GM12878 (cell line): ENCODE measurements at regions of chr13 and their contacts with region 1.

Region 1: DNA sequence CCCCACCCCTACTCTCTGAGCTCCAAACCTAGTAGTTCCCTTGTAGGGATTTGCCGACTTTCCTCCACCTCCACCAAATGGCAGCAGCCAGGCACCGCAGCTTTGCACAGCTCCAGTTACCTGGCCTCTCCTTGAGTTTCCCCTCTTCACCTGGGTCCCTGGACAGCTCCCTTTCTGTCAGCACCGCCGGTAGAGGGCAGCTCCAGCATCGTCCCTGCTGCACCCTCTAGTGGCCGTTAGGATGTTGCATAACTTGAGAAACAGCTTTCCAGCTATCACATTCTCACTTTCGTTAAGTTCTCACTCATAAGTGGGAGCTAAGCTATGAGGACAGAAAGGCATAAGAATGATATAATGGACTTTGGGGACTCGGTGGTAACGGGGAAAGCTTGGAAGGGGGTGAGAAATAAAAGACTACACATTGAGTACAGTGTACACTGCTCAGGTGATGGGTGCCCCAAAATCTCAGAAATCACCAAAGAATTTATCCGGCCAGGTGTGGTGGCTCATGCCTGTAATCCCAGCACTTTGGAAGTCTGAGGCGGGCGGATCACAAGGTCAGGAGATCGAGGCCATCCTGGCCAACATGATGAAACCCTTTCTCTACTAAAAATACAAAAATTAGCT is 60.4 kb upstream of the OLFM4 start:
- DNase-seq: peak; percentile 16
- ATAC-seq: peak; percentile 100
- H3K4me3 ChIP-seq: no peak overlapping the region
- H3K27ac ChIP-seq: no peak overlapping the region
- H3K4me1 ChIP-seq: no peaks in the 10 kb centered on the region
- H3K27me3 ChIP-seq: no peaks in the 10 kb centered on the region; a peak in 1 of 4 replicates
- CTCF ChIP-seq: peak; percentile 98 to 100 (median 99)
- EP300 ChIP-seq: no peak
- POLR2A ChIP-seq: no peak
- RAD21 ChIP-seq: peak; percentile 91

Region 2: DNA sequence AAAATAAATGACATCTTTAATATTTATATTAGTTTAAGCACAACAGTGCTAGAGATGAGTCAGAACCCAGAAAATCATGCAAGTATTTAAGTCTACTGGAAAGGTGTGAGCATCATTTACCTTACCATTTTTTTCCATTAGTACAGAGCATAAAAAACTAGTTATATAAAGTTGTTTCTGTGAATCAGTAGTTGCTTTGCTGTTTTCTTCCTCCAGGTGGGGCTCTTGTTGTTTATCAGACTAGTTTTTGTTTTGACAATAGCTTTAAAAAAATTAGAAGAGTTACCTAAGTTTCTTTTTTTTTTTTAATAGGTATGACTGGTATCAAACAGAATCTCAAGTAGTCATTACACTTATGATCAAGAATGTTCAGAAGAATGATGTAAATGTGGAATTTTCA is 302.9 kb before region 1 on chr13:
- CTCF ChIA-PET with region 1: interaction called, 98 read pairs
- POLR2A ChIA-PET with region 1: interaction called, 3 read pairs
- RAD21 ChIA-PET with region 1: interaction called, 57 read pairs
- SMC1A ChIA-PET with region 1: interaction called, 70 read pairs
- in situ Hi-C with region 1: loop called (anchors 10 kb)
- intact Hi-C with region 1: loop called (anchors 5 kb)
- DNase-seq: no peak
- ATAC-seq: peak; percentile 34
- H3K4me3 ChIP-seq: no peak overlapping the region
- H3K27ac ChIP-seq: no peak overlapping the region
- H3K4me1 ChIP-seq: peaks cover 3% of the 10 kb centered on the region; the same call in 1 of the 2 replicates
- H3K27me3 ChIP-seq: no peaks in the 10 kb centered on the region
- CTCF ChIP-seq: peak; percentile 38 to 53 (median 52); a peak in 4 of 6 replicates
- EP300 ChIP-seq: no peak
- POLR2A ChIP-seq: no peak
- RAD21 ChIP-seq: peak; percentile 60

Region 3: GRCh38 chr13:52815330-52815729 is 152.9 kb before region 1 on chr13:
- CTCF ChIA-PET with region 1: interaction called, 21 read pairs
- POLR2A ChIA-PET with region 1: no interaction called
- RAD21 ChIA-PET with region 1: interaction called, 24 read pairs
- SMC1A ChIA-PET with region 1: interaction called, 13 read pairs
- in situ Hi-C with region 1: no loop called
- intact Hi-C with region 1: no loop called
- DNase-seq: no peak
- ATAC-seq: no peak
- H3K4me3 ChIP-seq: no peak overlapping the region
- H3K27ac ChIP-seq: no peak overlapping the region
- H3K4me1 ChIP-seq: peaks cover 4% of the 10 kb centered on the region; the same call in 1 of the 2 replicates
- H3K27me3 ChIP-seq: no peaks in the 10 kb centered on the region
- CTCF ChIP-seq: no peak
- EP300 ChIP-seq: no peak
- POLR2A ChIP-seq: no peak
- RAD21 ChIP-seq: no peak

Region 4: GRCh38 chr13:52879950-52880741 is 88.0 kb before region 1 on chr13:
- CTCF ChIA-PET with region 1: interaction called, 13 read pairs
- POLR2A ChIA-PET with region 1: no interaction called
- RAD21 ChIA-PET with region 1: interaction called, 4 read pairs
- SMC1A ChIA-PET with region 1: interaction called, 3 read pairs
- in situ Hi-C with region 1: no loop called
- intact Hi-C with region 1: no loop called
- DNase-seq: no peak
- ATAC-seq: no peak
- H3K4me3 ChIP-seq: no peak overlapping the region
- H3K27ac ChIP-seq: no peak overlapping the region
- H3K4me1 ChIP-seq: no peaks in the 10 kb centered on the region
- H3K27me3 ChIP-seq: no peaks in the 10 kb centered on the region; a peak in 1 of 4 replicates
- CTCF ChIP-seq: no peak
- EP300 ChIP-seq: no peak
- POLR2A ChIP-seq: no peak
- RAD21 ChIP-seq: no peak

Region 5: GRCh38 chr13:52903320-52903719 is 64.9 kb before region 1 on chr13:
- CTCF ChIA-PET with region 1: interaction called, 34 read pairs
- POLR2A ChIA-PET with region 1: no interaction called
- RAD21 ChIA-PET with region 1: interaction called, 12 read pairs
- SMC1A ChIA-PET with region 1: interaction called, 6 read pairs
- in situ Hi-C with region 1: no loop called
- intact Hi-C with region 1: loop called (anchors 5 kb)
- DNase-seq: peak; percentile 23
- ATAC-seq: peak; percentile 99
- H3K4me3 ChIP-seq: no peak overlapping the region
- H3K27ac ChIP-seq: no peak overlapping the region
- H3K4me1 ChIP-seq: peaks cover 9% of the 10 kb centered on the region; the same call in 1 of the 2 replicates
- H3K27me3 ChIP-seq: peaks cover 0 to 2% of the 10 kb centered on the region in 2 experiments; a peak in 2 of 4 replicates
- CTCF ChIP-seq: no peak
- EP300 ChIP-seq: no peak
- POLR2A ChIP-seq: no peak
- RAD21 ChIP-seq: no peak

Region 6: DNA sequence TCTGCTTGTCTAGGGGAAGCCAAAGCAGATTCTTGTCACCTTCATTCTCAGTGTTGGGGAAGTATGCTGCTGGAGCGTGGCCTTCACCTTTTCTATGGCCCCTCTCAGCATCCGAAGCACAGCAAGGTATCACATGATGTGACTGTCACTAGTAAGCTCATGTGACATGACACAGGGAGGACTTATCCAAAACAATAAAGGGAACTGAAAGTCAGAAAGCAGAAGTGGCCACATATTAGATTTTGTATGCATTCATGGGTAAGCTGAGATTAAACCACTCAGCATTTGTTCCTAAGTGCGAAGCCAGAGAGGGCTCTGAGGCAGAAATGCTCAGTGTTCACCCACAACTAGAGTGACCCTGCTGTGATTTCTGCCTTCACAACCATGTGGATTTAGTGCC is 47.0 kb before region 1 on chr13:
- CTCF ChIA-PET with region 1: interaction called, 11 read pairs
- POLR2A ChIA-PET with region 1: no interaction called
- RAD21 ChIA-PET with region 1: interaction called, 15 read pairs
- SMC1A ChIA-PET with region 1: interaction called, 8 read pairs
- in situ Hi-C with region 1: no loop called
- intact Hi-C with region 1: loop called (anchors 2 kb)
- DNase-seq: peak; percentile 72
- ATAC-seq: peak; percentile 98
- H3K4me3 ChIP-seq: no peak overlapping the region
- H3K27ac ChIP-seq: no peak overlapping the region
- H3K4me1 ChIP-seq: peaks cover 11% of the 10 kb centered on the region
- H3K27me3 ChIP-seq: no peaks in the 10 kb centered on the region
- CTCF ChIP-seq: no peak
- EP300 ChIP-seq: peak; percentile 86 to 94; a peak in 3 of 4 replicates
- POLR2A ChIP-seq: no peak
- RAD21 ChIP-seq: no peak

Region 7: GRCh38 chr13:53020764-53021332 is 52.7 kb after region 1 on chr13:
- CTCF ChIA-PET with region 1: no interaction called
- POLR2A ChIA-PET with region 1: no interaction called
- RAD21 ChIA-PET with region 1: no interaction called
- SMC1A ChIA-PET with region 1: no interaction called
- in situ Hi-C with region 1: no loop called
- intact Hi-C with region 1: no loop called
- DNase-seq: no peak
- ATAC-seq: no peak
- H3K4me3 ChIP-seq: no peak overlapping the region
- H3K27ac ChIP-seq: no peak overlapping the region
- H3K4me1 ChIP-seq: no peaks in the 10 kb centered on the region
- H3K27me3 ChIP-seq: peaks cover 0 to 3% of the 10 kb centered on the region in 2 experiments; a peak in 2 of 4 replicates
- CTCF ChIP-seq: no peak
- EP300 ChIP-seq: no peak
- POLR2A ChIP-seq: no peak
- RAD21 ChIP-seq: no peak

Region 8: GRCh38 chr13:53052675-53053074 is 84.5 kb after region 1 on chr13:
- CTCF ChIA-PET with region 1: no interaction called
- POLR2A ChIA-PET with region 1: no interaction called
- RAD21 ChIA-PET with region 1: no interaction called
- SMC1A ChIA-PET with region 1: no interaction called
- in situ Hi-C with region 1: no loop called
- intact Hi-C with region 1: no loop called
- DNase-seq: no peak
- ATAC-seq: no peak
- H3K4me3 ChIP-seq: no peak overlapping the region
- H3K27ac ChIP-seq: no peak overlapping the region
- H3K4me1 ChIP-seq: no peaks in the 10 kb centered on the region
- H3K27me3 ChIP-seq: no peaks in the 10 kb centered on the region
- CTCF ChIP-seq: no peak
- EP300 ChIP-seq: no peak
- POLR2A ChIP-seq: no peak
- RAD21 ChIP-seq: no peak

Region 9: GRCh38 chr13:53151336-53152056 is 183.3 kb after region 1 on chr13:
- CTCF ChIA-PET with region 1: interaction called, 53 read pairs
- POLR2A ChIA-PET with region 1: interaction called, 6 read pairs
- RAD21 ChIA-PET with region 1: interaction called, 29 read pairs
- SMC1A ChIA-PET with region 1: interaction called, 29 read pairs
- in situ Hi-C with region 1: no loop called
- intact Hi-C with region 1: loop called (anchors 1 kb)
- DNase-seq: peak; percentile 32
- ATAC-seq: peak; percentile 95
- H3K4me3 ChIP-seq: no peak overlapping the region
- H3K27ac ChIP-seq: no peak overlapping the region
- H3K4me1 ChIP-seq: no peaks in the 10 kb centered on the region
- H3K27me3 ChIP-seq: no peaks in the 10 kb centered on the region
- CTCF ChIP-seq: peak; percentile 76 to 89 (median 89)
- EP300 ChIP-seq: no peak
- POLR2A ChIP-seq: no peak
- RAD21 ChIP-seq: peak; percentile 73

Region 10: GRCh38 chr13:53285896-53286430 is 317.8 kb after region 1 on chr13:
- CTCF ChIA-PET with region 1: no interaction called
- POLR2A ChIA-PET with region 1: no interaction called
- RAD21 ChIA-PET with region 1: no interaction called
- SMC1A ChIA-PET with region 1: no interaction called
- in situ Hi-C with region 1: no loop called
- intact Hi-C with region 1: no loop called
- DNase-seq: no peak
- ATAC-seq: no peak
- H3K4me3 ChIP-seq: no peak overlapping the region
- H3K27ac ChIP-seq: no peak overlapping the region
- H3K4me1 ChIP-seq: no peaks in the 10 kb centered on the region
- H3K27me3 ChIP-seq: no peaks in the 10 kb centered on the region
- CTCF ChIP-seq: no peak
- EP300 ChIP-seq: no peak
- POLR2A ChIP-seq: no peak
- RAD21 ChIP-seq: no peak